GM18951 (cell line): ENCODE measurements at regions of chr20 and their contacts with region 1.

Region 1: GRCh38 chr20:41339507-41340326 is 904 bp upstream of the LPIN3 start:
- POLR2A ChIP-seq: no peak

Region 2: GRCh38 chr20:40970201-40970600 is 369.5 kb before region 1 on chr20:
- in situ Hi-C with region 1: loop called (anchors 10 kb)
- POLR2A ChIP-seq: no peak

Region 3: GRCh38 chr20:41173161-41173721 is 166.5 kb before region 1 on chr20:
- in situ Hi-C with region 1: loop called (anchors 5 kb)
- POLR2A ChIP-seq: no peak

Region 4: GRCh38 chr20:41258474-41258873 is 81.2 kb before region 1 on chr20:
- in situ Hi-C with region 1: no loop called
- POLR2A ChIP-seq: no peak